GM13976 (cell line): ENCODE measurements at regions of chr4 and their contacts with region 1.

Region 1: DNA sequence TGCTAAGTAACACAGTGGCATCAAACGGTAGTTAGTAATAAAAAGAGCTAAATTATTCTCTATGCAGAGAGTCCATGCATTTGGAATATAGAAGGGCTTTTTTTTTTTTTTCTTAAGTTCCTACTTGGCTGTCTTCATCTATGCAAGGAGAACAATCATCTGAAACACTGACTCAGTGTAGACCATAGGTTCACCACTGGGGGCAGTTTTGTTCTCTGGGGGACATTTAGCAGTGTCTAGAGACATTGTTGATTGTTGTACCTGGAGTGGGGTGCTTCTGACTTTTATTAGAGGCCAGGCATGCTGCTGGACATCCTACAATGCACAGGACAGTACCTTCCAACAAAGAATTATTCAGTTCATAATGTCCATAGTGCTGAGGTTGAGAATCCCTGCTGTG is 41.2 kb downstream of the TMA16 start:
- DNase-seq: no peak
- CTCF ChIP-seq: no peak

Region 2: GRCh38 chr4:163356104-163356503 is 179.6 kb before region 1 on chr4:
- in situ Hi-C with region 1: no loop called
- DNase-seq: no peak
- CTCF ChIP-seq: no peak

Region 3: GRCh38 chr4:163484906-163485305 is 50.8 kb before region 1 on chr4:
- in situ Hi-C with region 1: loop called (anchors 10 kb)
- DNase-seq: peak; percentile 41
- CTCF ChIP-seq: peak; percentile 59

Region 4: GRCh38 chr4:163941221-163941905 is 405.7 kb after region 1 on chr4:
- in situ Hi-C with region 1: no loop called
- DNase-seq: no peak
- CTCF ChIP-seq: no peak